Vagina (tissue), 2 donors: ENCODE measurements at regions of chr1 and their contacts with region 1.

Region 1: GRCh38 chr1:85116856-85117255 is 68.6 kb upstream of the MCOLN3 start:
- DNase-seq: no peak
- H3K4me3 ChIP-seq: no peak overlapping the region
- H3K27ac ChIP-seq: no peak overlapping the region
- H3K4me1 ChIP-seq: no peaks in the 10 kb centered on the region
- H3K27me3 ChIP-seq: no peaks in the 10 kb centered on the region
- CTCF ChIP-seq: no peak
- POLR2A ChIP-seq: no peak

Region 2: GRCh38 chr1:84907095-84907827 is 209.6 kb before region 1 on chr1:
- intact Hi-C with region 1: no loop called
- DNase-seq: no peak
- H3K4me3 ChIP-seq: no peak overlapping the region
- H3K27ac ChIP-seq: no peak overlapping the region
- H3K4me1 ChIP-seq: no peaks in the 10 kb centered on the region
- H3K27me3 ChIP-seq: no peaks in the 10 kb centered on the region
- CTCF ChIP-seq: no peak
- POLR2A ChIP-seq: no peak

Region 3: DNA sequence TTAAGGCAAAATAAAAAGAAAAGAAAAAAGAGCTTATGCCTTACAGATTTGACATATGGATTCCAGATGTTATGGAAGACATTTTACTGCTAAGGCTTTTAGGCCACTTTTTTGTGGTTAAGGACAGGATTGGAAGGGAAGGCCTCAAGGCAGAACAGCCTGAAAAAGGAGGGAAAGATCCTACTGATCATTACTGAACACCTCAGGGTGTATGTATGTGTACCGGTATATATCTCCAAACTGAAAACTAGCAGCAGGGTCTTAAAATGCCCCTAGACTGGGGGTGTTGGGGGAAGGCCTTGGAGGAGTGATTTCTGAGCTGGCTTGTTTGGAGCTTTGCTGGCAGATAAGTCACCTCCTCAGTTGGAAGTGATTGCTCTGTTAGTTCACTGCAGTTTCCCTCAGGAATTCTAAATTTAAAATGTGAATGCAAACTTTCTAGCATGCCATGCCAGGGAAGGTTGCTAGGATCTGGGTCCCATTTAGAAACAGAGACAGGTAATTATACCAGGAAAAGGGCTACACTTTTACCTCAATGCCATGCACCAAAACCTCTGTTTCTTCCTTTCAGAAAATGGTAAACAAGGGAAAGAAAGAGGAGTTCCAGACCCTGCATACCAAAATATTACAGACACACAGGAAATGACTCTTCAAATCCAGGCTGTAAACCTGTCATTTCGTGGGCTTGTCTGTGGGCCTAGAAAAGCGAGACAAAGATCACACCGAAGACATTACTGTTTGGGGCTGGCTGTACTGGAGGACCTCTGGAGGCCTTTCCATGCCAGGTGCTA is 127.6 kb after region 1 on chr1:
- intact Hi-C with region 1: loop called (anchors 5 kb)
- DNase-seq: no peak
- H3K4me3 ChIP-seq: no peak overlapping the region
- H3K27ac ChIP-seq: peak overlapping the region; percentile 19
- H3K4me1 ChIP-seq: peaks cover 11% of the 10 kb centered on the region
- H3K27me3 ChIP-seq: no peaks in the 10 kb centered on the region
- CTCF ChIP-seq: no peak
- POLR2A ChIP-seq: no peak